AG04449 (cell line): ENCODE measurements at regions of chr1 and their contacts with region 1.

Region 1: GRCh38 chr1:203216274-203217138 is 13.0 kb downstream of the CHIT1 start:
- DNase-seq: no peak
- H3K4me3 ChIP-seq: no peak overlapping the region
- CTCF ChIP-seq: peak; percentile 56

Region 2: DNA sequence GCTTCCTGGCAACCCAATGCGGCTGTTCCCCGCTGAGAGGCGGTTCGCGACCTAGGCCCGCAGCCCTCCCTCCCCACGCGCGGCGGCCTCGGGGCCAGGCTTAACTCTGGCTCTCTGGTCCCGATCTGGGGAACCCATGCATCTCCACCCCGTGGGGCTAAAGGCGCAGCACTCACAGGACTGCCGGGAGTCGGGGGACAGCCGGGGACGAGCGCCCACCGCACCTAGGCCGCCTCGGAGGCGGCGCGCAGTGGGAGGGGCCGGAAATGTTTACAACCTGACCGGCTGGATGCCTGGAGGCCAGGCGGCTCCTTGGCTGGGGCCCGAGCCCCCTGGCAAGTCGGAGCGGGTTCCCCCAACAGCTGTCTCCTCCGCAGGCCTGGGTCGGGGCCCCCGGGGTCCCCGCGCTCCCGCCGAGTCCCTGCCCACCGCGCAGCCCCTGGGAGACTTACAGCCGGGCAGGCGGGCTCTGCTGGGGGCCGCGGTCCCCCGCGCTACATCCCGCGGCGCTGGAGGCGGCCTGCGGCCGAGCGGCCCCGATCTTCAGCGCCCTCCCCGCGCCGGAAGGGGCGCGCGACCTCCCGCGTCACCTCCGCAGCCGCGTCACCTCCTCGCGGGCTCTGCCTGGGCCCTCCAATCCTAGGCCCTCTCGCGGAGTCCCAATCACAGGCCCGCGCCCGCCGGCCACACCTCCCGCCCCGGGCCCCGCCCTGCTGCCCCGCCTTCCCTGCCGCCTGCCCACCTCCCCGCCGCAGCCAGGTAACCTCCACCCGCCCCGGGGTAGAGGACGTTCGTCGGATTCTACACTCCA is 258.6 kb before region 1 on chr1 and contains the start of gene ADIPOR1:
- CTCF ChIA-PET with region 1: no interaction called
- POLR2A ChIA-PET with region 1: no interaction called
- DNase-seq: no peak
- H3K4me3 ChIP-seq: peak within 1 kb of the TSS; percentile 91
- CTCF ChIP-seq: no peak

Region 3: DNA sequence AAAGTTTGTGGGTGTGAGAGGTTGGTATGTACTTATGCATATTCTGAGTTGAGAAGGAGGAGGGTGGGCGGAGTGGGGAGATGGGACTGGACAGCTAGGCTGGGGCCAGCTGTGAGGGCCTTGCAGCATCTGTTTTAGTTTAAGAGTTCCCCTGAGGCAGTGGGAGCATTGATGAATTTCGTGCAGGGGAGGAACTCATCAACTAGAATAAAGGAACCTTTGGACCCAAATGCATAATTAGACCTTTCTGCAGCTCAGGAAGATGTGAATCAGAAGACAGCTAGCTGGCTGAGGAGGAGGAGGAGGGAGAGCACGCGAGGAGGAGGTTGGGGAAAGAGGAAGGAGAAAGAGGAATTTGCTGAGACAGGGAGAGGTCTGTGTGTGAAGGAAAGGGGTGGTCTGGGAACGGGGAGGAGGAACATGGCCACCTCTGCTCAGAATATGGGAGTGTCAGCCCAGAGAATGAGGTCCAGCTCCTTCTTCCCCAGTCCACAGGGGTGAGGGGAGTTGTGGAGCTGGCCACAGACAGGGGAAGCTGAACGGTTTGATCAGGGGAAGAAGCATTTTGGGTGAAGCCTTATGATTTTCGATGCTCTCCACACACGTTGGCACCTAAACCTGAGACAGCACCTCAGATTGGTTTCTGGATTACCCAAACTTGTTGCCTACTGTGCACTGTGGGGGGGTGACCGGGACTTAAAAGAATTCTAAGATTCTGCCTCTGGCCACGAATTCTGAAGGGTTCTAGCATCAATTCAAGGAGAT is 158.4 kb before region 1 on chr1:
- CTCF ChIA-PET with region 1: interaction called, 11 read pairs
- POLR2A ChIA-PET with region 1: no interaction called
- DNase-seq: no peak
- H3K4me3 ChIP-seq: no peak overlapping the region
- CTCF ChIP-seq: no peak

Region 4: GRCh38 chr1:203084588-203085502 is 131.7 kb before region 1 on chr1:
- CTCF ChIA-PET with region 1: interaction called, 23 read pairs
- POLR2A ChIA-PET with region 1: no interaction called
- DNase-seq: no peak
- H3K4me3 ChIP-seq: no peak overlapping the region
- CTCF ChIP-seq: peak; percentile 39

Region 5: DNA sequence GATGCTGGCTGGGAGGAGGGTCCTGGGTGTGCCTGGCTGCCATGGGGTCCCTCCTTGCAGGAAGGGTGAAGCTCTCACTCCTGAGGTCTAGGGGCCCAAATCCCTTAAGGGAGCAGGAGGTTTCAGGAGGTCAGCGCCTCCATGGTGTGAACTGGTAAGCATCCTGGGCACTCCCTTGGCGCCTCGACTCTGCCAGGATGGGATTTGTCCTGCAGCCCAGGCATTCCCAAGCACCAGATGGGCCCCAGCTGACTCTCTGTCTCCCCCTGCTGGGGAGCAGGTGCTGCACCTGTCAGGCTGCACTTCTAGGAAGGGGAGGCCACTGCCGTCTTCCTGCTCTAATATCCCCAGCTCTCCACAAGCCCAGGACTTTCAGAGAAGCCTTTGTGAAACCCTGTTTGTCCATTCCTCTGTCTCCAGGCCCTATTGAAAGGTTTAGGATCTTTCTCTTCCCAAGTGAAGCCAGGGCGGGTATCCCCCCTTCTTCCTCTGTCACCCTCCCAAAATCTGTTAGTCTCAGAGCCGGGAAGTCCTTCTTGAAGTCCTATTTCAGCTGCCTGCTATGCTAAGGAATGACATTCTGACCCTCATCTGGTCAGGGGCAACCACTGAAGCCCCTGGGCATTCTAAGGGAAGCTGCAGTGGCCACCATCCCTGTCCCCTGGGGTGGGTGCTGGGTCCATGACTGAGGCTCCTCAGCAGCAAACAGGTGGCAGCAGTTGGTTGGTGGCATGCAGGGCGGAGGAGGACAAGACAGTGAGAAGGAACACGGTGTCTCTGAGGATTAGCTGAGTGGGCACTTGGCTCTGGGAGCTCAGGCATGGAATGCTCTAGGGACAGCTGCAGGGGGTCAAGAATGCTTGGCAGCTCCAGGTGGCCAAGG is 44.1 kb before region 1 on chr1:
- CTCF ChIA-PET with region 1: interaction called, 31 read pairs
- POLR2A ChIA-PET with region 1: no interaction called
- DNase-seq: no peak
- H3K4me3 ChIP-seq: no peak overlapping the region
- CTCF ChIP-seq: peak; percentile 91

Region 6: DNA sequence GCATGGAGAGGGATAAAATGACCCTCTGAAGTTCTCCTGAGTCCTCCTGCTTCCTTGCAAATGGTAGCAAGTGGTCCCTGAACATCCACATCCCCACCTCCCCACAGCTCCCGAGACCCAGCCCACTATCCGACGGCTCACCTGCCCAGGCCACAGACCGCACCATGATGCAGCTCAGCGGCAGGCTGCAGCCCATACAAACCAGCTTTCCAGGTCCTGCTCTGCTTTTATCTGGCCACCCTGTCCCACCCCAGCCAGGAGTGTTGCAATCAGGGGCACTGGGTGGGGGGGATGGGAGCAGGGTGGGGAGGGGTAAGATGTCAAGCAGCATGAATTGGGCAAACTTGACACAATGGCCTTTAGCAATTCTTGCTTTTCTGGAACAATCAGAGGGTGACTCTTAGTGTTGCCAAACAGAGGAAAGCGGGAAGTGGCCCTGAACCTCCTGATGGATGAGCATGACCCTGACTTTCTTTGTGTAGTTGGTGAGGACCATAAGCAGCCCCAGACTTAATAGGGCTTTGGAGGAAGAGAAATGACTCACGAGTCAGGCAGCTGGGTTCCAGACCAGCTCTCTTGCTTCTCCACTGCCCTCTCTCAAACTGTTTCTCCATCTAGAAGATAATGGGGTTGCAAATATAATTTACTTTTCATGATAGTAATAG is 13.1 kb after region 1 on chr1 and contains the start of gene CHIT1:
- CTCF ChIA-PET with region 1: interaction called, 44 read pairs
- POLR2A ChIA-PET with region 1: no interaction called
- DNase-seq: no peak
- H3K4me3 ChIP-seq: no peak within 1 kb of the TSS
- CTCF ChIP-seq: no peak

Region 7: DNA sequence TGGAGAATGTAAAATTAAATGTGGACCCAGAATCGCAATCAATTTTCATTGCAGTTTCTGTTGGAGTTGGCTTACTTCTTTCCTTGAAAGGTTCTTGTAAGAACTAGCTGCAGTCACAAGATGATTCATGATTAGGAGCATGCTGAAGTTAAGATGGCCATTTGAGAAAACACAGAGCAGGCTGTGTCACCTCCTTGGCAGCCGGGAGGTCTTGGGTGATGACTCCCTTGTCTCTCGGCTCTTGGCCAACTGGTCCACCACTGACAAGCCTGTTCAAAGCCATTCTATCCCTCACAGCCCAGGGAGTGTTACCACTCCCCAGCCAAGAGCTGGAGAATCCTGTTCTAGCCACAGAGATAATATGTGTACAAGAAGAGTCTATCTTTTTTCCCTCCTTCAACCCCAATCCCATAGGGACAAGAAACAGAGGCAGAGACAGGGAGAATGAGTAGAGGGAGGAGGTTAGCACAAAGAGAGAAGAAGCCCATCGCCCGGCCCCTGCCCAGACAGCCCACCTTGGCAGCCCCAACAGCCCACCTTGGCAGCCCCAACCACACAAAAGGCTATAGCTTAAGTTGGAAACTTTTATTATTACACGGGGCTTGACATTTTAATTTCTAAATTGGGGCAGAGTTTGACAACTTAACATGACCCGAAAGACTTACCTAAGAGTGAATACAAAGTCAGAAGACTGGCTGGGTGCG is 318.2 kb after region 1 on chr1:
- CTCF ChIA-PET with region 1: no interaction called
- POLR2A ChIA-PET with region 1: no interaction called
- DNase-seq: peak; percentile 89
- H3K4me3 ChIP-seq: no peak overlapping the region
- CTCF ChIP-seq: no peak